Esophagus squamous epithelium (tissue), 5 donors: ENCODE measurements at regions of chr12 and their contacts with region 1.

Region 1: DNA sequence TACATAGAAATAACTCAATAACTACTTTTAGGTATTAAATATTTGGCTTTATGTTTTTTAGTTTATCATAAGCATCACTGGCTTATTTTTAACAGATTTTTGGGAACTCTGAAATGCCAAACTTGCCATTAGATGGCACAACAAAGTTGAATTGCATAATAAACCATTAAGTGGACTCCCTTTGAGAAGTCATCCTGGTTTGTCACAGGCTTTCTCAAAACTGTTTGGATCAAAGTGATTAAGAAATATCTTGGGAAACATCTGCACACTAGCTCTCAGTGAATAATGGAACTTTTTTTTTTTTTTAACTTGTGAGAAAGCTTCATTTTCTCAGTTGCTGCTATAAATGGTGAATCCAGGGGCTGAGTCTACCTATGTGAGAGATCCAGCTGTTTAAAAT is 4.3 kb downstream of the SLC16A7 start:
- DNase-seq: no peak
- H3K4me3 ChIP-seq: no peak overlapping the region
- H3K27ac ChIP-seq: peak overlapping the region in 2 of 4 donors; percentile 39 to 40
- H3K4me1 ChIP-seq: peaks cover 9 to 37% (median 12%) of the 10 kb centered on the region in 3 donors
- H3K27me3 ChIP-seq: no peaks in the 10 kb centered on the region
- CTCF ChIP-seq: no peak
- POLR2A ChIP-seq: no peak

Region 2: DNA sequence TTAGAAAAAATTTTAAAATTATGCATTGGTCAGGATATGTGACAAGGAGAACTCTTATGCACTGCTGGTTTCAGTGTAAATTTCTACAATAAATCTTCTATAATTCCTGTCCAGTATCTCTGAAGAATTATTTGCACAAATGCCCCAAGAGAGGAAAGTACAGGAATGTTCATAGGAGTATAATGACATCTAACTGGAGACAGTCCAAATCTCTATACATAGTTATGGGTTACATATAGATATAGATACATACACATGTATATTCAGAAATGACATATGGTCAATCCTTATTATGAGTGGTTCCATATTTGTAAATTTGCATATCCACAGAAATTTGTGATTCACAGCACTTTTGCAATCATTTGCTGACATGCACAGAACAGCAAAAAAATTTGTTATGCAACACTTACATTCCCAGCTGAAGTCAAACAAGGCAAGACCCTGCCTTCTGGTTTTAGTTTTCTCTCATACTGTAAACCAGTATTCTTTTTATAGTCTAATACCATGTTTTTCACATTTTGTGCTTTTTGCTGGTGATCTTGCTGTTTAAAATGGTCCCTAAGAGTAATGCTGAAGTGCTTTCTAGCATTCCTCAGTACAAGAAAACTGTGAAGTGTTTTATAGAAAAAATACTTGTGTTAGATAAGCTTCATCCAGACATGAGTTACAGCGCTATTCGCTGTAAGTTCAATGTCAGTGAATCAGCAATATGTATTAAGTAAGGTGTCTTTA is 99.4 kb after region 1 on chr12:
- intact Hi-C with region 1: loop called (anchors 5 kb)
- DNase-seq: no peak
- H3K4me3 ChIP-seq: no peak overlapping the region
- H3K27ac ChIP-seq: no peak overlapping the region
- H3K4me1 ChIP-seq: peaks cover 0 to 17% (median 9%) of the 10 kb centered on the region in 3 donors
- H3K27me3 ChIP-seq: no peaks in the 10 kb centered on the region
- CTCF ChIP-seq: no peak
- POLR2A ChIP-seq: no peak